Dorsolateral prefrontal cortex (tissue), 120 donors: ENCODE measurements at regions of chr12 and their contacts with region 1.

Region 1: GRCh38 chr12:1583421-1584078 is 10.8 kb downstream of the FBXL14 start:
- DNase-seq: peak in 8 of 10 donors; percentile 50 to 78 (median 67)
- H3K4me3 ChIP-seq: peak overlapping the region in 45 of 59 donors; percentile 10 to 54 (median 28)
- H3K27ac ChIP-seq: peak overlapping the region in 1 of 59 donors; percentile 30
- H3K27me3 ChIP-seq: no peaks in the 10 kb centered on the region
- CTCF ChIP-seq: peak; percentile 79 to 97 (median 90)

Region 2: GRCh38 chr12:1117970-1118563 is 465.5 kb before region 1 on chr12:
- intact Hi-C with region 1: loop called (anchors 5 kb)
- DNase-seq: peak in 9 of 10 donors; percentile 50 to 81 (median 67)
- H3K4me3 ChIP-seq: no peak overlapping the region
- H3K27ac ChIP-seq: no peak overlapping the region
- H3K27me3 ChIP-seq: no peaks in the 10 kb centered on the region
- CTCF ChIP-seq: peak; percentile 81 to 99 (median 93)

Region 3: DNA sequence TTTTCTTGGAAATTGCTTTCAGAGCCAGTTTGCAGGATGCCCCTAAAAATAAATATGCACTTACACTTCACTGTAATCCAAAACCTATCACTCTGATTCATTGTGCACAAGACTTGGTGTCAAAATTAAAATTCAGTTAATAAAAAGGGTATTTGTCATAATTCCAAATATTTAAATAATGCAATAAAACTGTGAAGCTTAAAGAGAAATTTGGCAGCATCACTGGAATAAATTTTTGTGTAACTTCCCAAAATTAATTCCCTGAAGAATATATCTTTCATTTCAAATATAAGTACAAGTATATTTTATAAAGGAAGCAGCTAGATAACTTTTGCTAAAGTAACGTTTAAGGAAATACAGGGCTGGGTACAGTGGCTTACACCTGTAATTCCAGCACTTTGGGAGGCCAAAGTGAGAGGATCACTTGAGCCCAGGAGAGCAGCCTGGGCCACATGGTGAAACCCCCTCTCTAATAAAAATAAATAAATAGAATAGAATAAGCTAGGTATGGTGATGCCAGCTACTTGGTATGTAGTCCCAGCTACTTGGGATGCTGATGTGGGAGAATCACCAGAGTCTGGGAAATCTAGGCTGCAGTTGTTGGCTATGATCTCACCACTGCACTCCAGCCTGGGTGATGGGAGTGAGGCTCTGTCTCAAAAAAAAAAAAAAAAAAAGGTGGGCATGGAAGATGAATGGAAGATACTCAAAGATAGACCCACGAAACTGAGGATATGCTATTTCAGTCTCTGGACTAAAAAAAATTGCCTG is 222.9 kb before region 1 on chr12:
- intact Hi-C with region 1: no loop called
- DNase-seq: no peak
- H3K4me3 ChIP-seq: no peak overlapping the region
- H3K27ac ChIP-seq: no peak overlapping the region
- H3K27me3 ChIP-seq: no peaks in the 10 kb centered on the region
- CTCF ChIP-seq: no peak